Activated B cell treated with CpG ODN at 0.5 μM for 24 hours (primary cell): ENCODE measurements at regions of chr4 and their contacts with region 1.

Region 1: DNA sequence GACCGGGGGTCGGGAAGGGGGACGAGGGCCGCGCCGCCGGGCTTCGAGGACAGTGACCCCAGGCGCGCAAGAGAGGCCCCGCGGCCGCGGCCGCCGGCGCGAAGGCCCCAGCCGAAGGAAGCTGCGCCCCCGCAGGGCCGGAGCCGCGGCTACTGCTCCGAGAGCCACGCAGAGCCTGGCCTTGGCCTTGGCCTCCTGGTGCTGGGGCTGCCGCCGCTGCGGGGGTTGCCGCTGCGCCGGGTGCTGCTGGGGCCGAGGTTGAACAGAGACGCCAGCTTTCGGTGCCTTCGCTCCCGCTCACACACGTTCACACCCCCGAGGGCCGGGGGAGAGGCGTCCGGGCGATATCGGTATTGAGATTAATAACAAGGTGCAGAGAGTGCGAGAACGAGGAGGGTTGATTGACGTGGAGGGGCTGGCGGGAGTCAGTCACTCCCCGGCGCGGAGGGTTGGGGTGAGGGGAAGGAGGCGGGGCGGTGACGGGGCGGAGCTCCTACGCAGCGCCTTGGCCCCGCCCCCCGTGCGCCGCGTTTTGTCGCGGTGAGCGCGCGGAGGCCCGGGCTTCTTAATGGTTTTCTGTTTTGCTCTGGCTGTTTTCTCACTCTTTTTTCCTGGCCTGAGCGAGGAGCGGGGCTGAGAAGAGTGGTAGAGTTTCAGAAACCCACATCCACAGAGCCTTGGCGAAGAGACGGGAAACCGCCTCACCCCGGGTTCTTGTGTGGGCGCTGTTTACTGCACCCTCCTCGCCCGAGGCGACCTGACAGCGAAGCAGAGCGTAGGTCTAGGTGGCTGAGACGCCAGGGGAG is 878 bp upstream of the CNOT6L start:
- DNase-seq: peak; percentile 92
- ATAC-seq: peak; percentile 74
- H3K4me3 Mint-ChIP-seq: peak overlapping the region; percentile 95
- H3K27ac Mint-ChIP-seq: peak overlapping the region; percentile 96
- H3K4me1 Mint-ChIP-seq: peaks cover 57% of the 10 kb centered on the region
- H3K27me3 Mint-ChIP-seq: no peaks in the 10 kb centered on the region
- CTCF ChIP-seq: no peak

Region 2: DNA sequence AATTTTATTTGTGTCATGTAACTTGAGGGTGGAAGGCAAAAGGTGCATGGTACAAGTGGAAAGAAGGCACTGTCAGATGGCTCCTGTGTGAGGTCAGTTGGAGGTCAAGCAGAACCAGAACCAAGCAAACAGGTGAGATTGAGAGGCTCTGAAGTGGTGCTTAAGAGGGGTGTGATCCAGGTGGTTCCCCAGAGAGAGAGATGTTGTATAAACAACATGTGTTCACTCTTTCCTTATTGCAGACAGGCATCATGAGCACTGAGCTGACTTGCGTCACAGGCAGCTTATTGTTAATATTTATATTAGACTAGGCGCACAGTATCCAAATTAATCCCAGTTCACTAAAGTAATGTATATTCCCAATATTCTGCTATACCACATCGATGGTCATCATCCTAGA is 157.7 kb before region 1 on chr4:
- CTCF ChIA-PET with region 1: no interaction called
- POLR2A ChIA-PET with region 1: no interaction called
- intact Hi-C with region 1: no loop called
- DNase-seq: no peak
- ATAC-seq: no peak
- H3K4me3 Mint-ChIP-seq: no peak overlapping the region
- H3K27ac Mint-ChIP-seq: no peak overlapping the region
- H3K4me1 Mint-ChIP-seq: no peaks in the 10 kb centered on the region
- H3K27me3 Mint-ChIP-seq: peaks cover 2% of the 10 kb centered on the region
- CTCF ChIP-seq: no peak

Region 3: DNA sequence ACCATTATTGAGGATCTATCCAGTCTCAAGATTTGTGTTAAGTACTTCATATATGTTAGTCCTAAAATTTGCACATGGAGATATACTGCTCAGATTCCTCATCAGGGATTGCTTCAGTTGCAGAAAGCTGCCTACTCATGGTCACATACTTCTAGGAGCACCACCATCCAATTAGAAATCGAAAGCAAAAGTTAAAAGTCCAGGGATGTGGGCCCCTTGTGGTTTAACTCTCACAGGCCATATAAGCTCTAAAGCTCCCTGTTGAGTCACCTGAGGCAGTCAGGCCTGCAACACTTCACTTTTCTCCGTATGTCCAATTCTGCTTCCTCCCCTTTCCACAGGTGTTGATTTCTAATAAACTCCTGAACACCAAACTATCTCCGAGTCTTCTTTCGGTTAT is 85.1 kb before region 1 on chr4:
- CTCF ChIA-PET with region 1: no interaction called
- POLR2A ChIA-PET with region 1: interaction called, 5 read pairs
- intact Hi-C with region 1: loop called (anchors 1 kb)
- DNase-seq: no peak
- ATAC-seq: peak; percentile 71
- H3K4me3 Mint-ChIP-seq: no peak overlapping the region
- H3K27ac Mint-ChIP-seq: peak overlapping the region; percentile 57
- H3K4me1 Mint-ChIP-seq: peaks cover 42% of the 10 kb centered on the region
- H3K27me3 Mint-ChIP-seq: no peaks in the 10 kb centered on the region
- CTCF ChIP-seq: no peak

Region 4: GRCh38 chr4:77790146-77790545 is 29.9 kb before region 1 on chr4:
- CTCF ChIA-PET with region 1: no interaction called
- POLR2A ChIA-PET with region 1: interaction called, 11 read pairs
- intact Hi-C with region 1: no loop called
- DNase-seq: no peak
- ATAC-seq: no peak
- H3K4me3 Mint-ChIP-seq: no peak overlapping the region
- H3K27ac Mint-ChIP-seq: no peak overlapping the region
- H3K4me1 Mint-ChIP-seq: peaks cover 42% of the 10 kb centered on the region
- H3K27me3 Mint-ChIP-seq: no peaks in the 10 kb centered on the region
- CTCF ChIP-seq: no peak

Region 5: GRCh38 chr4:77852892-77853495 is 32.9 kb after region 1 on chr4:
- CTCF ChIA-PET with region 1: interaction called, 5 read pairs
- POLR2A ChIA-PET with region 1: interaction called, 417 read pairs
- intact Hi-C with region 1: loop called (anchors 2 kb)
- DNase-seq: peak; percentile 29
- ATAC-seq: peak; percentile 99
- H3K4me3 Mint-ChIP-seq: peak overlapping the region; percentile 73
- H3K27ac Mint-ChIP-seq: peak overlapping the region; percentile 91
- H3K4me1 Mint-ChIP-seq: peaks cover 46% of the 10 kb centered on the region
- H3K27me3 Mint-ChIP-seq: no peaks in the 10 kb centered on the region
- CTCF ChIP-seq: no peak

Region 6: DNA sequence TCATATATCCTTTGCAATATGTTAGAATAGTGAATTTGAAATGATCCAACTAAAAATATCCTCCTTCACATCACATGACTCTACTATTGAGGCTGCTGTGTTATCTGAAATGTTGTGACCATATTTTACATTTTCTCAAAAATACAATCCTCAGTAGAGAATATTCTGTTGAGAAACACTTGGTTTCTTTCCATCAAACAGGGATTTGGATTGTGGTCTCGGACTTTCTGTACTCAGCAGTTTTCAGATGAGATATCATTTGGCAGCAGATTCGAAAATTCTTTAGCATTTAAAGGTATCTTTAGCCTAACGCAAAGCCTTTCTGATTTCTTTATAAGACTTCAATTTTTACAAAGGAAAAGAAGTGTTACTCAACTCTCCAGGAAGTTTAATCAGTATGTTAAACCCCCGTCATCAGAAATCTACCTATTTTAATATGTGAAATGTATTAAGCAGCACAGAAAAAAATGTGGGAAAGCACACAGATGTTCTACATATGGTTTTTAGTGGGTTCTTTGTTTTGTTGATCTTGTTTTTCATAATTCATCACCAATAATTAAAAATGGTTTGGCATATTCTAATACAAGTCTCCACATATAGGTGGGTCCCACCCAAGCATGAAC is 676.1 kb after region 1 on chr4:
- CTCF ChIA-PET with region 1: no interaction called
- POLR2A ChIA-PET with region 1: no interaction called
- intact Hi-C with region 1: no loop called
- DNase-seq: no peak
- ATAC-seq: no peak
- H3K4me3 Mint-ChIP-seq: no peak overlapping the region
- H3K27ac Mint-ChIP-seq: no peak overlapping the region
- H3K4me1 Mint-ChIP-seq: no peaks in the 10 kb centered on the region
- H3K27me3 Mint-ChIP-seq: peaks cover 3% of the 10 kb centered on the region
- CTCF ChIP-seq: no peak